Naive thymus-derived CD4-positive, alpha-beta T cell (primary cell): ENCODE measurements at regions of chr16 and their contacts with region 1.

Region 1: GRCh38 chr16:70523076-70523742 is at the start of gene COG4:
- DNase-seq: peak; percentile 72 to 94 (median 90)
- ATAC-seq: peak; percentile 91
- H3K4me3 ChIP-seq: peak within 1 kb of the TSS; percentile 100
- H3K4me3 Mint-ChIP-seq: peak within 1 kb of the TSS; percentile 93 to 100 (median 98)
- H3K27ac ChIP-seq: peak within 1 kb of the TSS; percentile 95
- H3K27ac Mint-ChIP-seq: peak within 1 kb of the TSS; percentile 98 to 100 (median 99)
- H3K4me1 ChIP-seq: peaks cover 27 to 41% of the 10 kb centered on the region in 2 donors
- H3K4me1 Mint-ChIP-seq: peaks cover 30 to 66% (median 55%) of the 10 kb centered on the region in 7 donors
- H3K27me3 ChIP-seq: no peaks in the 10 kb centered on the region
- H3K27me3 Mint-ChIP-seq: no peaks in the 10 kb centered on the region
- total RNA-seq, gene COG4: 38.3 to 68.6 (median 58.7) TPM

Region 2: GRCh38 chr16:70251629-70252354 is 271.4 kb before region 1 on chr16 and contains the start of gene EXOSC6:
- CTCF ChIA-PET with region 1: interaction called, 3 read pairs
- POLR2A ChIA-PET with region 1: interaction called, 10 read pairs
- intact Hi-C with region 1: loop called (anchors 2 to 5 kb)
- DNase-seq: peak; percentile 85 to 94 (median 93)
- ATAC-seq: peak; percentile 99
- H3K4me3 ChIP-seq: peak within 1 kb of the TSS; percentile 67
- H3K4me3 Mint-ChIP-seq: peak within 1 kb of the TSS; percentile 82 to 93 (median 90)
- H3K27ac ChIP-seq: peak within 1 kb of the TSS; percentile 85
- H3K27ac Mint-ChIP-seq: peak within 1 kb of the TSS; percentile 86 to 96 (median 92)
- H3K4me1 ChIP-seq: peaks cover 5 to 15% of the 10 kb centered on the region in 2 donors
- H3K4me1 Mint-ChIP-seq: peaks cover 0 to 41% (median 24%) of the 10 kb centered on the region in 7 donors
- H3K27me3 ChIP-seq: no peaks in the 10 kb centered on the region
- H3K27me3 Mint-ChIP-seq: no peaks in the 10 kb centered on the region
- total RNA-seq, gene EXOSC6: 25.5 to 45.9 (median 36.4) TPM

Region 3: DNA sequence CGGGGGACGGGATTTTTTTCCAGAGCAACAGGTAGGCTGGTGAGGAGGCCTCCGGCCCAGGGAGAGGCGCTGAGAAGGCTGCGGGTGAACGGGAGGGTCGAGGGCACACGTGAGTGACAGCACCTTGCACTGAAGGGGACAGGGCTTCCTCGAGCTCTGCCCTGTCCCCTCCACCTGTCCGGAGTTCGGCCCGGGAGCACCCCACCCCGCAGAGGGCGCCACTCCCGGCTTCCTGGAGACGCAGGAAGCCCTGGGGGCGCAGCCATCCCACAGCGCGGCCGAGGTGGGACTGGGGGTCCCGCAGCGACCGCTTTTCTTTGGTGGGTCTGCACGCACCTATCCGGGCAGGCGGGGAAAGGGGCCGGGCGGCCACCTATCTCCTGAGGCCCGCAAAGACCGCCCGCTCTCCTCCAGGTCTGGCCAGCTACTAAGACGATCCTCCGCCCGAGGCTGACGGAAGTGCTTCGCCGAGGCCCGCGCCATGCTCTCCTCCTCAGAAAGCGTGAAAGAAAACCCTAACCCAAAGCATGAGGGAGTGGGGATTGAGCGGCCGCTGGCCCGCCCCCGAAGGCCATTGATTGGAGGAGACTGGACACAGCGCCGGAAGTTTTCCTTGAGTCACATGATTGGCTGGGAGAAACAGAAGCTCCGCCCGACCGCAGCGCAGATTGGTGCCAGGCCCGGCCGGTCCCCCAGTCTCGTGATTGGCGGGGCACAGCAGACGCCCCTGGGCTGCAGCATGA is 142.2 kb before region 1 on chr16:
- CTCF ChIA-PET with region 1: interaction called, 3 read pairs
- POLR2A ChIA-PET with region 1: interaction called, 15 read pairs
- intact Hi-C with region 1: loop called (anchors 1 kb)
- DNase-seq: peak; percentile 83 to 97 (median 96)
- ATAC-seq: peak; percentile 96
- H3K4me3 ChIP-seq: peak overlapping the region; percentile 86
- H3K4me3 Mint-ChIP-seq: peak overlapping the region; percentile 89 to 100 (median 97)
- H3K27ac ChIP-seq: peak overlapping the region; percentile 83
- H3K27ac Mint-ChIP-seq: peak overlapping the region; percentile 92 to 98 (median 94)
- H3K4me1 ChIP-seq: peaks cover 9 to 13% of the 10 kb centered on the region in 2 donors
- H3K4me1 Mint-ChIP-seq: peaks cover 0 to 26% (median 24%) of the 10 kb centered on the region in 7 donors
- H3K27me3 ChIP-seq: no peaks in the 10 kb centered on the region
- H3K27me3 Mint-ChIP-seq: no peaks in the 10 kb centered on the region

Region 4: DNA sequence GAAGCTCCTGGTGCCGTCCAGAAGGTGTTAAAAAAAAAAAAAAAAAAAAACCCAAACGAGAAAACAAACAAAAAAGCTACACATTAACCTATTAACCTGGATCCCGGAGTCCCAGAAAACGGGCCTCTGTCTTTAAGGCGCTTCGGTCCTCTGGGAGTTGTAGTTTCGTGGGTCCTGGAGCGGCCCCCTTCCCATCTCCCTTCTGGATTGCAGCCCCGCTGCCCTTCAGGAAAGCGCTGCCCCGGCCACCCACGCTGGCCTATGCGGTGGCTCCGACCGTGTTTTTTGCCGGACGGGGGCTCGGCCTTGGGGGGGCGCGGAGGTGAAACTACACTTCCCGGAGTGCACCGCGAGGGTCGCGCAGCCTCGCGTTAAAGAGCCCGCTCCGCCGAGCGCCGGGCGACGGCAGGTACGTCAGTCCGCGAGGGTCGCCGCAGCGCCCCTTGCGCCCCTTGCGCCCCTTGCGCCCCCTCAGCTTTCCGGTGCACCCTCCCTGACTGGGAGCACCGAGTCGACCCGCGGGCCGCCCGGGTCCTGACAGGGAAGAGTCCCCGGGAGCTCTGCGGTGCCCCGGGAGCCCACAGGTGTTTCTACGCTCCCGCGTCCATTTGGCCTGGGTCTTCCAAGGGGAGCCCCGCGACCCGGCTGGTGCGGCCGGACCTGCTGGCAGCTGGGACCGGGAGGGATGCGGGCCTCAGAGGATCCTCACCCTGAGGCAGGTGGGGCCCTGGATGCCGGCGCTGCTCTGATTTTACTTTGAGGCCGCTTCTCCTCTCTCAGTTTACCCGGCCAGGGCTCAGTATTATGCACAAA is 68.8 kb before region 1 on chr16 and contains the start of gene FCSK:
- CTCF ChIA-PET with region 1: interaction called, 3 read pairs
- POLR2A ChIA-PET with region 1: no interaction called
- intact Hi-C with region 1: loop called (anchors 2 kb)
- DNase-seq: peak; percentile 63 to 88 (median 84)
- ATAC-seq: peak; percentile 94
- H3K4me3 ChIP-seq: peak within 1 kb of the TSS; percentile 82
- H3K4me3 Mint-ChIP-seq: peak within 1 kb of the TSS; percentile 90 to 95 (median 93)
- H3K27ac ChIP-seq: peak within 1 kb of the TSS; percentile 99
- H3K27ac Mint-ChIP-seq: peak within 1 kb of the TSS; percentile 81 to 95 (median 89)
- H3K4me1 ChIP-seq: peaks cover 8 to 12% of the 10 kb centered on the region in 2 donors
- H3K4me1 Mint-ChIP-seq: peaks cover 6 to 45% (median 37%) of the 10 kb centered on the region in 7 donors
- H3K27me3 ChIP-seq: no peaks in the 10 kb centered on the region
- H3K27me3 Mint-ChIP-seq: peaks cover 0 to 3% (median 0%) of the 10 kb centered on the region in 5 donors
- total RNA-seq, gene FCSK: 23.7 to 45.2 (median 36.7) TPM

Region 5: DNA sequence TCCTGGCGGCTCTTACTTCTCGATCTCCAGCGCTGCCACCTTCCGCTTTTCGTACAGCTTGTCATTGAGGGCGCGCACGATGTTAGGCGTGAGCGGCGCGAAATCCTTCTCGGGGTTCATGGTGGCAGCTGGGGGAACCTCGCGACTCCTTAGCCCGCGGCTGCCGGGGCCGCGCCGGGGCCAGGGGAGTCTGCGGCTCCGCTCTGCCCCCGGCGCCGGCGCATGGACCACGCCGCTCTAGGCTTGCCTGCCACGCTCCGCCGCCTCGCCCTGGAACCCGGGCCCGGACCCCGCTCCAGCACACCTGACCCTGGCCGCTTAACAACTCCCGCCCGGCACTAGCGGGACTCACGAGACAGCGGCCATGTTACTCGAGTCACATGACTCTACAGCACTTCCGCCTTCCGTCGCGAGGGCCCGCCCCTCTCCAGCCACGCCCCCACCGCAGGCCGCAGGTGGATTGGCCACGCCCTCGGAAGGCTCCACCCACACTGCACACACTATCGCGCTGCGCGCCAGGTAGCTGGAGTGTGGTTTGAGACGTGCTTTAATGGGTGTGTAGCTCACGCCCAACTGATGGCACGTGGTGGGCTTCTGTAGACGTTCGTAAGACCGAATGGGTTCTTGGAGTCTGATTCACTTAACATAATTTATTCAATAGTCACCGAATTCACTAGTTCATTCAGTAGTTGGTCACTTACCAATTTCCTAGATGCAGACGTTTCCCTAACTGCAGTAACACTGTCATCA is 277.7 kb after region 1 on chr16 and contains the start of gene VAC14:
- CTCF ChIA-PET with region 1: no interaction called
- POLR2A ChIA-PET with region 1: interaction called, 5 read pairs
- intact Hi-C with region 1: loop called (anchors 1 kb)
- DNase-seq: peak; percentile 96 to 99 (median 97)
- ATAC-seq: peak; percentile 99
- H3K4me3 ChIP-seq: peak within 1 kb of the TSS; percentile 90
- H3K4me3 Mint-ChIP-seq: peak within 1 kb of the TSS; percentile 90 to 98 (median 94)
- H3K27ac ChIP-seq: peak within 1 kb of the TSS; percentile 78
- H3K27ac Mint-ChIP-seq: peak within 1 kb of the TSS; percentile 84 to 95 (median 92)
- H3K4me1 ChIP-seq: peaks cover 11 to 17% of the 10 kb centered on the region in 2 donors
- H3K4me1 Mint-ChIP-seq: peaks cover 19 to 49% (median 44%) of the 10 kb centered on the region in 7 donors
- H3K27me3 ChIP-seq: no peaks in the 10 kb centered on the region
- H3K27me3 Mint-ChIP-seq: peaks cover 0 to 15% (median 0%) of the 10 kb centered on the region in 5 donors
- total RNA-seq, gene VAC14: 36.7 to 47.1 (median 45.9) TPM